ENCODE measurements at regions of chr9 and their contacts with region 1.

Region 1: DNA sequence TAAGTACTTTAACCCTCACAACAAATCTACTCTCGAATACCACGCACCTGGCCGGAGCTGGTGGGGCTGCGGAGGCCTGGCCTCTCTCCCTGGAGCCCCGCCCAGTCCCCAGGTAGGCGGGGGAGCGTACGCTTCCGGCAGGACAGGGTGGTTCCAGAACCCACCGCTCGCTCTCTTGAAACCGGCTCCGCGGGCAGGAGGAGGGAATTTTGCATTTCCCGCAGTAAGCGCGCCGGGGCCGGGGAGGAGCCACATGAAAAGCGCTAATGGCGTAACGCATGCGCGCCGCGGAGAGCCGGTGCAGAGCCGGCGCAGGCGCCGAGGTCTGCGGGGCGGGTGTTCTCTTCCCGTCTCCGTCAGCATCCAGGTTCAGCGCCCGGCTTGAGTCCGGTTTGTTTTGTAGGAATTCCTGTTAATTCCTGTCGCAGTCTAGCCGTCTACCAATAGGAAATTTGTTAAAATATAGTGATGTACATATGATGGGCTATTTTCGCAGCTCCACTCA is 20.8 kb downstream of the CAVIN4 start:
- DNase-seq: peak; percentile 73 to 90 (median 82)
- H3K4me3 ChIP-seq: peak overlapping the region; percentile 42 to 80 (median 66)
- H3K27ac ChIP-seq: peak overlapping the region in 48 of 59 donors; percentile 1 to 84 (median 54)
- H3K27me3 ChIP-seq: no peaks in the 10 kb centered on the region
- CTCF ChIP-seq: peak in 41 of 56 donors; percentile 17 to 67 (median 41)

Region 2: DNA sequence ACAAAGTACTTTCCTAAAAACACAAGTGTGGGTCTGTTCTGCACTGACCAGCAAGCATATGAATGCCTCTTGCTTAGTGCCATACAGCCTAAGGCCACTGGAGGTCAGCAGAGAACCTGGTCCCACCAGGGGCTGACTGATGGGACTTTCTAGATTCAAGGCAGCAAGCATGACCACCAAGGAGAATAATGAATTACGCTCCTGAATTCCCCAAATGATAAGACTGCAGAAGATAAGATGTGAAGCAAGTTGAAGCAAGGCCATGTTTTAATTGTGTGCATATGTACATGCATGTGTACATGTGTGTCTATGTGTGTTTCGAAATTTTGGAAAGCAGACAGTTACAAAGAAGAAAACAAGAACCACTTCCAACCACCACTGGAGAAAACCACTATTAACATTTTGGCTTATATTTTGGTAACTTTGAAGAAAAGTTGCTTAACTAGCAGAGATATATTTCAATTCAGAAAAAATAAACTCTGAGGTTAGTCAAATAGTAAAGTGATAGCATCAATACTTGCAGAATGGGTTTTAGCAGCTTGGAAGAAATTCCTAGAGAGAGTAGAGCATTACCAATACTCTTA is 570.4 kb before region 1 on chr9:
- intact Hi-C with region 1: loop called in 1 of 2 experiments (anchors 10 kb)
- DNase-seq: peak in 9 of 10 donors; percentile 42 to 77 (median 58)
- H3K4me3 ChIP-seq: no peak overlapping the region
- H3K27ac ChIP-seq: no peak overlapping the region
- H3K27me3 ChIP-seq: no peaks in the 10 kb centered on the region
- CTCF ChIP-seq: peak; percentile 46 to 95 (median 88)

Region 3: DNA sequence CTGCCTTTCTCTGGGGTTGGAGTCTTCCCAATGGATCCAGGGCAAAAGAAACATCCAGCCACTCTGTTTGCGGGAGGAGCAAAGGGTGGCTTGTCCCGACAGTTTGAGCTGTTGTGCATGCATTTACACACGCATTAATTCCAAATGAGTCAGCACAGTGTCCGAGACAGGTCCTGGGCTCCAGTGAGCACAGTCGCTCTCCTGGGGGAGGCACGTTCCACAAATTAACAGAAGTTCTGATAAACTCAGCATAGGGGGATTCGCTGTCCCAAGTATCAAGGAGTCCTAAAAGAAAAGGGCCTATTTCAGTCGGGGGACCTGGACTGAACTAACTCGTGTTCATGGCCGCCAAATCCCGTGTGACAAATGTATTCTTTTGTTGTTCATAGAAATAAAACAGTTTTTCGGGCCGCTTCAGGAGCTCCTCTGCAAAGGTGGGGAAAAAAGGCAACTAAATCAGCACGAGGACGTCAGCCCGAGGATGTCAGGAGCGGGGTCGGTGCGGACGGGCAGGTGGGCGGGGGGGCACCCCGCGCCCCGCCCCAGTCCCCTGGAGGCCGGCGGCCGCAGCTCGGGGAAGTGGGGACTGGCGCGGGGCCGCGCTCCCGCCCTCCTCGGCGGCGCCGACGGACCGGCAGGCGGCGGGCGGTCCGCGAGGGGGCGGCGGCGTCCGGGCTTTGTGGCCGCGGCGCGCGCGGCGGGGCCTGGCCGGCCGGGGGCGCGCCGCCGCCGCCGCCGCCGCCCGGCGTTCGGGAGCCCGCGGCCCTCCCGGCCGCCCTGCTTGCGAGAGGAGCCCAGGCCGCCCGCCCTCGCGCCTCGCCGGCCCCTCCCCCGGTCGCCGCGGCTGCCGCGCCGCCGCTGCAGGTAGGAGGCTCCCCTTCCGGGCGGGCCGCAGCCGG is 171.9 kb before region 1 on chr9 and contains the start of gene MSANTD3:
- intact Hi-C with region 1: loop called (anchors 5 kb)
- DNase-seq: peak in 8 of 10 donors; percentile 34 to 73 (median 50)
- H3K4me3 ChIP-seq: peak within 1 kb of the TSS; percentile 68 to 92 (median 83)
- H3K27ac ChIP-seq: peak within 1 kb of the TSS; percentile 43 to 93 (median 87)
- H3K27me3 ChIP-seq: peaks cover 0 to under 1% (median 0%) of the 10 kb centered on the region in 45 donors
- CTCF ChIP-seq: peak in 20 of 56 donors; percentile 8 to 46 (median 18)
- total RNA-seq, gene MSANTD3: 19.8 to 52.0 (median 34.3) TPM

Region 4: GRCh38 chr9:100472788-100473275 is 125.9 kb before region 1 on chr9 and contains the start of gene TMEFF1:
- intact Hi-C with region 1: loop called in 1 of 2 experiments (anchors 10 kb)
- DNase-seq: peak; percentile 30 to 83 (median 65)
- H3K4me3 ChIP-seq: peak within 1 kb of the TSS; percentile 45 to 99 (median 89)
- H3K27ac ChIP-seq: peak within 1 kb of the TSS; percentile 33 to 95 (median 85)
- H3K27me3 ChIP-seq: no peaks in the 10 kb centered on the region
- CTCF ChIP-seq: peak in 38 of 56 donors; percentile 9 to 56 (median 30)
- total RNA-seq, gene TMEFF1: 15.9 to 42.8 (median 25.6) TPM

Region 5: GRCh38 chr9:101028346-101029314 is 429.9 kb after region 1 on chr9 and contains the start of gene PLPPR1:
- intact Hi-C with region 1: loop called in 1 of 2 experiments (anchors 10 kb)
- DNase-seq: peak; percentile 72 to 89 (median 84)
- H3K4me3 ChIP-seq: peak within 1 kb of the TSS; percentile 54 to 91 (median 77)
- H3K27ac ChIP-seq: peak within 1 kb of the TSS in 58 of 59 donors; percentile 48 to 94 (median 85)
- H3K27me3 ChIP-seq: peaks cover 0 to 19% (median 0%) of the 10 kb centered on the region in 45 donors
- CTCF ChIP-seq: peak in 13 of 56 donors; percentile 4 to 24 (median 17)
- total RNA-seq, gene PLPPR1: 3.8 to 68.1 (median 17.9) TPM

Region 6: GRCh38 chr9:101311758-101312420 is 713.2 kb after region 1 on chr9:
- intact Hi-C with region 1: loop called (anchors 2 to 5 kb)
- DNase-seq: no peak
- H3K4me3 ChIP-seq: no peak overlapping the region
- H3K27ac ChIP-seq: peak overlapping the region in 30 of 59 donors; percentile 0 to 75 (median 40)
- H3K27me3 ChIP-seq: no peaks in the 10 kb centered on the region
- CTCF ChIP-seq: peak; percentile 70 to 97 (median 84)

Measured in dorsolateral prefrontal cortex (tissue), 120 donors.